SK-N-SH (cell line): ENCODE measurements at regions of chr13 and their contacts with region 1.

Region 1: DNA sequence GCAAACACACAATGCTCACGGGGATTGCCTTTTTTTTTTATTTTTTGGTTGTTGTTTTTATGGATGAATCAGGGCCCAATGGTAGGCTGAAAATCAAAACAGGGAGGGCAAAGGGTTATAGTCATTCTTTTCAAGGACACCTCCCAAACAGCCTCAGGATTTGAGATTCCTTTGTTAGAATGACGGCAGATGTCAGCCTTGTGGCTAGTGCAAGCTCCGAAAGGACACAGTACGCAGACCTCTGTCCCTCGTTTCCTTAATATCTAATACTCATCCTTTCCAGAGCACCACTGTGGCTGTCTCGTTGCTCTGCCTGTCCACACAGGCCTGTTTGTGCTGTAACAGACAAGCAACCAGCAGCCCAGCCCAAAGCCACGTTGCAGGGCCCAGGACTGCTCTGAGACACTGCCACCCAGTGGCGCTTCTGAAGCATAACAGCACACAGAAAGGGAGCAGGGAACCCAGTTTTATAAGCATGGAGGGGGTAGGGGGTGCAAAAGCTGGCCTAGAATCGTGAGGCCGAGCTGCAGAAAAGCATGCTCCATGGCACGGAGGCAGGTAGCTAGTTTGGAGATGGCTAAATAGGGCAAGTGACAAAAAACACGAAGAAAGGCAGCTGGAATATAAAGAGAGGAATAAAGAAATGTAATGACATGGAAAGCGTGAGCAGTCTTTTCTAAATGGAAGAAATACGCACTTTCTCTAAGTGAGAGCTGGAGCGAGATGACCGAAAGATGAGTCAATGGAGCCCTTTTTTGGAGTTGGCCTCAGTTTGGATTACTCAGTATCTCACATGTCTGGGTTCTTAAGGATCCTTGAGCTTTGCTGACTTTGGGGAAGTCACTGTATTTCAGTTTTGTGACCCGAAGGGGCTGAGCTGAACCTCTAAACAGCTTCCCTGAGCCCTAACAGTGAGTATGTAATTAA is 40.7 kb upstream of the MEDAG start:
- DNase-seq: peak; percentile 80
- H3K4me3 ChIP-seq: peak overlapping the region in 1 of 2 experiments; percentile 19; a peak in 2 of 4 replicates
- H3K27ac ChIP-seq: peak overlapping the region; percentile 97 to 99
- H3K4me1 ChIP-seq: peaks cover 43 to 47% of the 10 kb centered on the region in 2 experiments
- H3K27me3 ChIP-seq: no peaks in the 10 kb centered on the region
- CTCF ChIP-seq: peak; percentile 97
- EP300 ChIP-seq: peak; percentile 7 to 21; a peak in 1 of 4 replicates
- RAD21 ChIP-seq: peak; percentile 95

Region 2: DNA sequence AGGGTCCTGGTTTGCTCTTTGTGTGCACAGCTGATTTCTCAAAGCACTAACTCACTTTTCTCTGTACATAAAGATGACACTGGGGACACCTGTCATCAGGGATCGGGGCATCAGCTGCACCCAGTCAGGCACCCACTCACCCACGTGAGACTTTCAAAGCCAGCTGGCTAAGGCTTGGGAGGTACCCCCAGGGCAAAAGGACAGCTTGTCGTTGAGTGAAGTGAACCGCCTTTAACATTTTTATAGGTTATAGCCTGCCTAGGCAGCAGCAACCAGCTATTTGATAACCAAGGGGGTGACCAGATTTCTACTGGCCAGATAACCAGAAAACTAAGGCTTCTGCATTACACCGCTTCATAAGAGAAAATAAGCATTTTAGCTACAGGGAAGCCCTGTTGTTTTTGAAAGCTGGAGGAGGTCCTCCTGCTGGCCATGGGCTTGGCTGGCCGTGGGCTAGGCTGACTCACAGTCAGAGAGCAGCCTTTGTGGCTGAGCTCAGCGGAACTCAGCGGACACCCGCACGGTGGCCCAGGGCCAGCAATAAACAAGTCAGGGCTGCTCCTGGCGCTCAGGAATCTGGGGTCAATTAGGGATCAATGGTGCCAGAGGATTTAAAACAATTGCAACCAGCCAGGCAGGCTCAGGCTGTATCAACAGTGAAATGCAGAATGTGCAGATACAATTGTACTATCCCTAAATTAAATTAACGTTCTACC is 72.9 kb before region 1 on chr13:
- CTCF ChIA-PET with region 1: interaction called, 19 read pairs
- POLR2A ChIA-PET with region 1: interaction called, 13 read pairs
- DNase-seq: peak; percentile 75
- H3K4me3 ChIP-seq: 0 out of 4 replicates have a peak overlapping the region, but pooled peaks of 1 of the 2 experiments have one; percentile 1
- H3K27ac ChIP-seq: peak overlapping the region; percentile 70 to 93
- H3K4me1 ChIP-seq: peaks cover 32 to 42% of the 10 kb centered on the region in 2 experiments
- H3K27me3 ChIP-seq: no peaks in the 10 kb centered on the region
- CTCF ChIP-seq: peak; percentile 53
- EP300 ChIP-seq: peak; percentile 86 to 91; a peak in 3 of 4 replicates
- RAD21 ChIP-seq: peak; percentile 44

Region 3: DNA sequence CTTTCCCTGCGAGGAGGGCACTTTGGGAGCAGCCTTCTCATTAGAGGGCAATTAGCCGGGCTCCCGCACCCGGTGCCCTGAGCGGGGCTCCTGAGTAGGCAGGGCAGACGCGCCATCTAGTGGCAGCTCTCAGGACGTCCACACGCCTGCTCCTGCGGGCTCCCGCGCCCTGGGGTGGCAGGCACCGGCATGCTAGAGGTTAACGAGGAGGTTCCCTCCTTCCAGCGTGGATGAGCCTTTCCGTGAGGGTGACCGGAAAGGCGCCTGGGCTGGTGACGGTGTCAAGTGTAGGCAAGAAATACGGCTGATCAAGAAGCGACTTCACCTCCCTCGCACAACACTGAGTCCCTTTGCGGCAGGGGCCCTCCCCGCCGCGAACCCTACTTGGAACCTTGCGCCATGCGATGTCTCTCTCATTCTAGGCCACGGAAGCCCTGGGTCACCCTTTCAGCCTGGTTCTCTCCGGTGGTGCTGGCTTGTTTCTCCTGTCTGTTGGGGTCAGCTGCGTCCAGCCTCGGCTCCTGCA is 62.4 kb before region 1 on chr13:
- CTCF ChIA-PET with region 1: interaction called, 33 read pairs
- POLR2A ChIA-PET with region 1: interaction called, 6 read pairs
- DNase-seq: peak; percentile 82
- H3K4me3 ChIP-seq: peak overlapping the region in 1 of 2 experiments; percentile 17; a peak in 1 of 4 replicates
- H3K27ac ChIP-seq: no peak overlapping the region
- H3K4me1 ChIP-seq: peaks cover 19 to 24% of the 10 kb centered on the region in 2 experiments
- H3K27me3 ChIP-seq: no peaks in the 10 kb centered on the region
- CTCF ChIP-seq: peak; percentile 89
- EP300 ChIP-seq: no peak
- RAD21 ChIP-seq: peak; percentile 95

Region 4: DNA sequence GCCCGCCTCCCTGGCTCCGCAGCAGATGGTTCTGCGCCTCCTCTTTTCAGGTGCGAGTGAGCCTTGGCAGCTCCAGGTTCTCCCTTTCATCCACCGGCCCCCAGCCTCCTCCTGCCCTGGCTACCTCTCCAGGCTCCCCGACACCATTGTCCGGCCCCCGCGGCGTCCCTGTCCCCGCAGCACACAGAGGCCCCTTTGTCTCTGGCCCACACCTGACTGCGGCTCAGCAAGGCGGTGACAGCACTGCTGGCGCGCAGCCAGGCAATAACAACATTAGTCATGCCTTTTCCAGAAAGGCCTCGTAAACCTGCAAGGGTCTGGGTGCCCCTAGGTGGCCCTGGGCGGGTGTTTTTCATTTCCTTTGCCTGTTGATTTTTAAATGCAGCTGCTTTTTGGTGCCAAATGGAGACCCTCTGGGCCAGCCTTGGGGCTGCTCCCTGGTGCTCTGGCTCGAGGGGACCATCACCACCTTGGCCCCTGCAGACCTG is 32.5 kb before region 1 on chr13:
- CTCF ChIA-PET with region 1: interaction called, 19 read pairs
- POLR2A ChIA-PET with region 1: no interaction called
- DNase-seq: peak; percentile 82
- H3K4me3 ChIP-seq: no peak overlapping the region
- H3K27ac ChIP-seq: no peak overlapping the region; a peak in 1 of 4 replicates
- H3K4me1 ChIP-seq: peaks cover 11 to 17% of the 10 kb centered on the region in 2 experiments; a peak in 2 of 4 replicates
- H3K27me3 ChIP-seq: no peaks in the 10 kb centered on the region
- CTCF ChIP-seq: no peak
- EP300 ChIP-seq: peak in 1 of 2 experiments; percentile 40; a peak in 1 of 4 replicates
- RAD21 ChIP-seq: no peak

Region 5: GRCh38 chr13:31012655-31013024 is 147.3 kb after region 1 on chr13:
- CTCF ChIA-PET with region 1: interaction called, 31 read pairs
- POLR2A ChIA-PET with region 1: no interaction called
- DNase-seq: peak; percentile 70
- H3K4me3 ChIP-seq: no peak overlapping the region
- H3K27ac ChIP-seq: peak overlapping the region in 1 of 2 experiments; percentile 58; a peak in 2 of 4 replicates
- H3K4me1 ChIP-seq: peaks cover 0 to 25% of the 10 kb centered on the region in 2 experiments; a peak in 2 of 4 replicates
- H3K27me3 ChIP-seq: no peaks in the 10 kb centered on the region
- CTCF ChIP-seq: peak; percentile 66
- EP300 ChIP-seq: no peak
- RAD21 ChIP-seq: peak; percentile 89

Region 6: GRCh38 chr13:31050486-31051400 is 185.4 kb after region 1 on chr13:
- CTCF ChIA-PET with region 1: interaction called, 36 read pairs
- POLR2A ChIA-PET with region 1: interaction called, 6 read pairs
- DNase-seq: peak; percentile 38
- H3K4me3 ChIP-seq: no peak overlapping the region
- H3K27ac ChIP-seq: 0 out of 4 replicates have a peak overlapping the region, but pooled peaks of 1 of the 2 experiments have one; percentile 7
- H3K4me1 ChIP-seq: peaks cover 15 to 25% of the 10 kb centered on the region in 2 experiments
- H3K27me3 ChIP-seq: no peaks in the 10 kb centered on the region
- CTCF ChIP-seq: peak; percentile 56
- EP300 ChIP-seq: no peak
- RAD21 ChIP-seq: no peak